ENCODE measurements at regions of chr15 and their contacts with region 1.

Region 1: DNA sequence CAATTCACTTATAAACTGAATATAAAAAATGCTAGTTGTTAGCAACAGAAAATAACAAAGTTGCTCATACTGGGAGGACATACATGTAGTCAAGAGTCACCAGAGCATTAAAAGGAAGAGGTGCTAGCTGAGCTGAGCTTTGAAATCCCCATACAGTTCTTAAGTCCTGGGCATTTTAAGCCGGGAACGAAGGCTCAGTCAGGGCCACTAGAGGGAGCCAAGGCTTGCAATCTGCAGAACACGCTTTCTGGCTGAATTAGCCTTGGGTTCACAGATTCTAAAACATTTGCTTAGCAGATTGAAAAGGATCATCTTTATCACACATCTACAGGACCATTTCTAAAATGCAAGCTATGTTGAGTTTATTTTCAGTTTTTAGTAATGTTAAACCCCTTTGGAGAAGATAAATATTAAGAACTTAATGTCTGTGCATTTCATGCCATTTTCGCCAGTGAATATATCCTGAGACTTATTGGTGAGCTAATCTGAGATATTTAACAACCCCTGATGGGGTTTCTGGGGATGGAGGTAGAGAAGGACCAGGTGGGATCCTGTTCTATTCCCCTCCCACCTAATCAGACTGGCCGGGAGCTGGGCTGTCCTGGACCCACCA is 26.3 kb upstream of the MNS1 start:
- DNase-seq: peak; percentile 84
- H3K4me3 ChIP-seq: no peak overlapping the region
- H3K27ac ChIP-seq: no peak overlapping the region
- H3K4me1 ChIP-seq: no peaks in the 10 kb centered on the region
- H3K27me3 ChIP-seq: no peaks in the 10 kb centered on the region; the same call in 1 of the 2 replicates

Region 2: DNA sequence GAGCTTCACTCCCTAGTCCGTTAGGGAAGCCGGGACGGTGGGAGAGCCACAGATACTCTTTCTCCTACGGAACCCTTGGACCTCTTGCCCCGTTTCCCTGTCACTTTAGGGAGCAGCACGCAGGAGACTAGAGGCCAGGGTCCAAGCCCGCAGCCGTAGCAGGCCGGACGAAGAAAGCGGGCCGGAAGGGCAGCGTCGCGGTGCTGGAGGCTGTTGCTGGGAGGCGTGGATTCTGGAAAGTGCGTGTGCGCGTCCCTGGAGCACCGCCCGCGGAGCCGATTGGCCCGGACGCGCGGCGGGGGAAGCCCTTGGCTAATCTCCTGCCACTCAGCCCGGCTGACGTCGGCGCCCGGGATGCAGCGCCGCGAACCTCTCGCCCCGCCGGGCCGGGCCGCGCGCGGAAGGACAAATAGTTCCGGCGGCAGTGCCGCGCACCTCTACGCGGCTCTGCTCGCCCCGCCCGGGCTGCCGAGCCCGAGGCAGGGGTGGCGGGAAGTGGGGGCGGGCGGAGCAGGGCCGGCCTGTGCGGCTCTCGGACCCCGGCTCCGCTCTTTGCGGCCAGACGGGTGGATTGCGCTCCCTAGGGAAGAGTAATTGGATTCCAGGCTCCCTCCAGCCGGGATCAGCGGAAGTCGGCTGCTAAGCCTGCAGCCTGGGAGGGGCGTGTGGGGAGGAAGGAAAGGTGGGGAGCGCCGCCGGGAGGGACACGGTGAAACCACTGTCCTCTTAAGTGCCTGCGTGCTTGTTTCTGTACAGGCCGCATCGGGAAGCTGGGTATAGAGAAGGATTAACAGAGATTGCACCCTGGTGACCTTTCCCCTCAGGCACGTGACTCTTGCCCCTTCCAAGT is 395.9 kb after region 1 on chr15:
- in situ Hi-C with region 1: loop called (anchors 25 kb)
- DNase-seq: peak; percentile 99
- H3K4me3 ChIP-seq: peak overlapping the region; percentile 75
- H3K27ac ChIP-seq: peak overlapping the region; percentile 89
- H3K4me1 ChIP-seq: peaks cover 14% of the 10 kb centered on the region
- H3K27me3 ChIP-seq: no peaks in the 10 kb centered on the region

Region 3: GRCh38 chr15:57146506-57147201 is 655.4 kb after region 1 on chr15:
- in situ Hi-C with region 1: loop called (anchors 25 kb)
- DNase-seq: peak; percentile 78
- H3K4me3 ChIP-seq: peak overlapping the region; percentile 62
- H3K27ac ChIP-seq: peak overlapping the region; percentile 48
- H3K4me1 ChIP-seq: peaks cover 33% of the 10 kb centered on the region
- H3K27me3 ChIP-seq: no peaks in the 10 kb centered on the region

Region 4: GRCh38 chr15:57306161-57306943 is 815.1 kb after region 1 on chr15:
- in situ Hi-C with region 1: loop called (anchors 10 kb)
- DNase-seq: peak; percentile 86
- H3K4me3 ChIP-seq: peak overlapping the region; percentile 79
- H3K27ac ChIP-seq: no peak overlapping the region
- H3K4me1 ChIP-seq: no peaks in the 10 kb centered on the region
- H3K27me3 ChIP-seq: no peaks in the 10 kb centered on the region

Region 5: GRCh38 chr15:57527382-57528091 is 1036.3 kb after region 1 on chr15:
- in situ Hi-C with region 1: loop called (anchors 25 kb)
- DNase-seq: peak; percentile 96
- H3K4me3 ChIP-seq: no peak overlapping the region
- H3K27ac ChIP-seq: no peak overlapping the region
- H3K4me1 ChIP-seq: peaks cover 17% of the 10 kb centered on the region
- H3K27me3 ChIP-seq: no peaks in the 10 kb centered on the region

Measured in GM23248 (cell line).